ENCODE measurements at regions of chr6 and their contacts with region 1.

Region 1: DNA sequence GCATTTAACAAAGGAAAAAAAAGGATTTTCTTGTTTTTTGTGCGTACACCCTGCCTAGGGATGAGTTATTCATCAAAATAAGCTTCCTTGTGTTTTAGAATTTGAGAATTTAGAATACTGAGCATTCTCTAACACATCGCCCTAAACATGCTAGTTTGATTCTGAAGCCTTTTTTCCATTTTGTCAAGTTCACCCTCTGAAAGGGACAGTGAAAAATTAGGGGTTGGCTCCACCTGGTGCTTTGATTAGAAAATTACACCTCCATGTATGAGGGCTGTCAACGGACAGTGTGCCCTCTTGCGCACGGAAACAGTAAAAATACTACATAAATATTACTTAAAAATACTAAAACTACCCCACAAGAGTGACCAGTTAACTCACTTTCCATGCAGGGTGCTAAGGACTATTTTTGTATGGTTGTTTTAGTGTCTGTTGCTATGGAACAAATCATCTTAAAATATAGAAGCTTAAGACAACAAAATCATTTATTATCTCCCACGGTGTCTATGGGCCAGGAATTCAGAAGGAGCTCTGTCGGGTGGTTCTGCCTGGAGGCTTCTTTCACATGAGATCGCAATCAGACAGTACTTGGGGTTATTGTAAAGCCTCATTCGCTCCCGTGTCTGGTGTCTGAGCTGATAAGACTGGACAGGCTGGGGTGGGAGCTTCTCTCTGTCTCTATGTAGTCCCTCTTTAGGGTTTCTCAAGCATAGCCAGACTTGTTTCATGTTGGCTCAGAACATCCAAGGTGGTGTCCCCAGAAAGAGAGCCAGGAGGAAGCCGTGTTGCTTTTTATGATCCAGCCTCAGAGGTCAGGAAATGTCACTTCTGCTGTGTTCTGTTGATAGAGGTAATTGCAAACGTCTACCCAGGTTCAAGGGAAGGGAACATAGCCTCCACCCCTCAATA is 41.1 kb upstream of the TMEM170B start:
- H3K4me3 ChIP-seq: no peak overlapping the region
- H3K27ac ChIP-seq: no peak overlapping the region
- H3K4me1 ChIP-seq: no peaks in the 10 kb centered on the region
- CTCF ChIP-seq: peak; percentile 83

Region 2: GRCh38 chr6:11139056-11139960 is 357.1 kb before region 1 on chr6:
- CTCF ChIA-PET with region 1: interaction called, 110 read pairs
- POLR2A ChIA-PET with region 1: no interaction called
- H3K4me3 ChIP-seq: no peak overlapping the region
- H3K27ac ChIP-seq: no peak overlapping the region
- H3K4me1 ChIP-seq: no peaks in the 10 kb centered on the region
- CTCF ChIP-seq: no peak

Region 3: DNA sequence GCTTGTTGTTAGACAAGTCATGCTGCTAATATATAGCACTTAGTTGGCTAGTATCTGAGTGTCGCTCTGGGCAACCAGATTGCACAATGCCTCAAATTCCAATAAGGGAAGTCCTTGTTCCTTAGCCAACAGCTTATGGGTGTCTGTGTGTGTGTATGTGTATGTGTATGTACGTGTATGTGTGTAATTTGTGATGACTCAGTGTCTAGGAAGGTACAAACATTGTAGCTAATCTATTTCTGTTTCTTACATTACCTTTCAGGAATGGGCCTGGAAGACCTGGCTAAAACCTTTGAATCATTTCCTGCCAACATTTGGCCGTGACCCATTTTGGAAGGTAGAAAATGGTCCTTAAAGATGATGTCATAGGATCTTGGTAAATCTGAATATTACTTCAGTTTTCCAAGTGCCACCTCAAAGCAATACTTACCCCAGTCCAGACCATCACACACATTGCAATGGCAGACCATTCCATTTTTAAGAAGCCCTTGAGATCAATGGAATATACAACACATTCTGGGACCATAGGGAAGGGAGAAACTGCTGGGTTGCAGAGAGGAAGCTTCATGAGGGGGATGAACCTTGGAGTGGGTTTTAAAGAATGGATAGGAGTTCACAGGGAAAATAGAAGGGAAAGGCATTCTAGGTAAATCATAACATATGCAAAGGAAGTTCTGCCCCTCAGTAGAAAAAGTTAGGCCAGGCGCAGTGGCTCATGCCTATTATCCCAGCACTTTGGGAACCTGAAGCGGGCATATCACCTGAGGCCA is 289.0 kb before region 1 on chr6:
- CTCF ChIA-PET with region 1: interaction called, 16 read pairs
- POLR2A ChIA-PET with region 1: no interaction called
- H3K4me3 ChIP-seq: no peak overlapping the region
- H3K27ac ChIP-seq: no peak overlapping the region
- H3K4me1 ChIP-seq: peaks cover 12% of the 10 kb centered on the region
- CTCF ChIP-seq: no peak

Region 4: DNA sequence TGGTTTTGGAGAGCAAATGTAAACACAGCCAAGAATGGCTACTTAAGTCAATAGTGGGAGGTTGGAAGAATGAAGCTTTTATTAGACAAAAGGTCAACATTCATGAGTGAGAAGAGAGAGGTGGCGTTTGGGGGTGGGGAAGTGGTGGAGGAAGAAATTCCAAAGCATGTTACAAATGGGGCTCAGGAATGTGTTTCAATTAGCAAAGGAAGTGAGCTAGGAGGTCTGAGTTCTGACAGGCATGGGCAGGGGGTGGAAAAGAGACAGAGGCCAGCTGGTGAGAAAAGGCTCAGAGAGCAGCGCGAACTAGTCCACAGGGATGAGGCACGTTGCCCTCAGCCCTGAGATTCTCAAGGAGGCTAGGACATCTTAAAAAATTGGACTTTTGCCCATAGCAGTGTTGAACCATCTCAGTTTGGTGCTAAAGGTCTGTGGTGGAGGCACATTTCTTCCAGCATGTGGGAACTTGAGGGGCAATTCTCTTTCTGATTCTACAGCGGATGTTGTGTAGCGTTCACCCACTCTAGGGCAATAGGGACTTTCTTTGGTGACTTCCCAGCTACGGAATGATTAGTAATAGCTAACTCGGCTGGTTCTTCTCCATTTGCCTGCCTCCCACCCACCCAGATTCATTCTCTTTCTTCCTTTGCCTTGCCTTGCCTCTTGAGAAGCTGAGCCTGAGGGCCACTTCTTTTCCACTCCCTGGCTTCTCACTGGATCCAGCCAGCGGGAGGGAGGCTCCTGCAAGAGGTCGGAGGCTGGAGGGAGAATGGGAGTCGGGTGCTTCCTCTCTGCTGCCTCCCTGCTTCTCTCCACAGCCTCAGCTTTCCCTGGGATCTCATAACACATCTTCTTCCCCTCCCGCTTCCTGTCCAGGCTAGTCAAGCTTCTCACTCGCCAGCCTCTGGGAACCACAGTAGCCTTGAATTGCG is 218.9 kb before region 1 on chr6:
- CTCF ChIA-PET with region 1: interaction called, 10 read pairs
- POLR2A ChIA-PET with region 1: no interaction called
- H3K4me3 ChIP-seq: no peak overlapping the region
- H3K27ac ChIP-seq: no peak overlapping the region
- H3K4me1 ChIP-seq: peaks cover 16% of the 10 kb centered on the region
- CTCF ChIP-seq: no peak

Region 5: GRCh38 chr6:11460001-11460668 is 36.3 kb before region 1 on chr6:
- CTCF ChIA-PET with region 1: interaction called, 14 read pairs
- POLR2A ChIA-PET with region 1: no interaction called
- H3K4me3 ChIP-seq: no peak overlapping the region
- H3K27ac ChIP-seq: no peak overlapping the region
- H3K4me1 ChIP-seq: no peaks in the 10 kb centered on the region; the same call in 1 of the 2 replicates
- CTCF ChIP-seq: no peak

Region 6: GRCh38 chr6:11527274-11527870 is 31.0 kb after region 1 on chr6:
- CTCF ChIA-PET with region 1: interaction called, 11 read pairs
- POLR2A ChIA-PET with region 1: no interaction called
- H3K4me3 ChIP-seq: no peak overlapping the region
- H3K27ac ChIP-seq: no peak overlapping the region
- H3K4me1 ChIP-seq: no peaks in the 10 kb centered on the region
- CTCF ChIP-seq: no peak

Region 7: GRCh38 chr6:11714116-11714797 is 217.9 kb after region 1 on chr6:
- CTCF ChIA-PET with region 1: no interaction called
- POLR2A ChIA-PET with region 1: no interaction called
- H3K4me3 ChIP-seq: no peak overlapping the region
- H3K27ac ChIP-seq: no peak overlapping the region
- H3K4me1 ChIP-seq: peaks cover 7% of the 10 kb centered on the region
- CTCF ChIP-seq: no peak

Measured in HEK293 (cell line).